ENCODE measurements at regions of chr10 and their contacts with region 1.

Region 1: DNA sequence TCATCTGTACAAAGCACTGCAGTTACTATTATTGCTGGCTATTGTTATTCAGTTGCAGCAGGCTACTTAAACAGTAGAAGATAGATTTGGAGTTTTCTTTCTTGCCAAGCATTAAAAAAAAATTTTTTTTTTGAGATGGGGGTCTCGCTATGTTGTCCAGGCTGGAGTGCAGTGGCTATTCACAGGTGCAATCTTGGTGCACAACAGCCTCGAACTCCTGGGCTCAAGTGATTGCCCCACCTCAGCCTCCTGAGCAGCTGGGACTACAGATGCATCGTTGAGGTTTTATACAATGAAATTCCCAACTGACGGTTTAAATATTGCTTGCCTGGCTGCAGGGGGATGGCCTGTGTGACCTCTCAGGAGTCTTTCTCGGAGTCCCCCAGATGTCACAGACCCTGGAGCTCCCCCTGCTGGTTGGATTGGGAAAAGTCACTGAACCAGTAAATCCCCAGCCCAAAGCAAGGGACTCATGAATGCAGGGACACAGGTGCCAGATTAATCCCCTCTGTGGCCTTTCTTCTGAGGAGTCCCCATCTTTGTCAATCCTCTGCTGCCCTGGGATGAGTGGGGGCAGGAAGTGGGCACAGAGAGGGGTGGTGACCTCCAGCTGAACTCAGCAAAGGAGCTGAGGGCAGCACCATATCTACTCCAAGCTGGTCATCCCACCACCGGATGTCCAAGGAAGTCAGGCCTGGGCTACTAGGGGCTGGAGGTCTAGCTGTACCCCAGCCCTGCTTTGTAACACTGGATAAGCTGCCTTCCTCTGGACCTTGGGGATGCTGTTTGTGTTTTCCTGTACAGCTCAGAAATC is 149.6 kb downstream of the C10orf105 start:
- DNase-seq: peak; percentile 18
- ATAC-seq: peak; percentile 82
- H3K4me3 ChIP-seq: no peak overlapping the region
- H3K27ac ChIP-seq: no peak overlapping the region
- H3K4me1 ChIP-seq: no peaks in the 10 kb centered on the region
- H3K27me3 ChIP-seq: 0 out of 2 replicates have a peak, but pooled peaks cover 3% of the 10 kb centered on the region
- CTCF ChIP-seq: peak; percentile 67 to 88 (median 83)
- POLR2A ChIP-seq: no peak
- RAD21 ChIP-seq: peak; percentile 79

Region 2: DNA sequence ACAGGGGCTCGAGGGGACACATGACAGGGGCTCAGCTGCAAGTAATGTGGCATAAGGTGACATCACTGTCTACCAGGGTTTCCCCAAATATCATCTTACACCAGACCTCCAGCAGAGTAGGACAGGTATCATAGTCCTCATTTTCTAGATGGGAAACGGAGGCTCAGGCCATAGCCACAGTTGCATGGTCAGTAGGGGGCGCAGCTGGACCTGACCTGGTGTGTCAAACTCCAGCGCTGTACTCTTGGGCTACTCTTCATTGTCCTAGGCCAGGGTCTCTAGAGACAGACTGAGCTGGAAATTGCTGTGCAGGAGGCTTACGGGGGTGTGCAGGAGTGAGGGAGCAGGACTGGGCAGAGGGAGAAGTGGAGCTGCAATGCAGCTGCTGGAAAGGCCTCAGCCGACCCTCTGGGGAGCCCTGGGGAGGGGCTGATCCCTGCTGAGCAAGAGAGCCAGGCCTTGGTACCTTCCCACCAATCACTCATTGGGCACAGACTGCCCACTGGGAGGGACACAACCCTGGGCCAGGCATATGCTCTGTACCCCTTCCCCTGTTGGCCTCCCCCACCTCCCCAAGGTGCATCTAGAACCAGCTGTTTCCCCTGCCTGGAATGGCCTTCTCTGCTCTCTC is 83.4 kb before region 1 on chr10:
- CTCF ChIA-PET with region 1: interaction called, 4 read pairs
- POLR2A ChIA-PET with region 1: no interaction called
- RAD21 ChIA-PET with region 1: no interaction called
- intact Hi-C with region 1: loop called (anchors 1 kb)
- DNase-seq: peak; percentile 36
- ATAC-seq: peak; percentile 99
- H3K4me3 ChIP-seq: no peak overlapping the region
- H3K27ac ChIP-seq: no peak overlapping the region
- H3K4me1 ChIP-seq: no peaks in the 10 kb centered on the region
- H3K27me3 ChIP-seq: 0 out of 2 replicates have a peak, but pooled peaks cover 4% of the 10 kb centered on the region
- CTCF ChIP-seq: peak; percentile 76 to 96 (median 91)
- POLR2A ChIP-seq: no peak
- RAD21 ChIP-seq: peak; percentile 86

Region 3: GRCh38 chr10:71771821-71772617 is 202.0 kb after region 1 on chr10:
- CTCF ChIA-PET with region 1: no interaction called
- POLR2A ChIA-PET with region 1: no interaction called
- RAD21 ChIA-PET with region 1: no interaction called
- intact Hi-C with region 1: no loop called
- DNase-seq: peak; percentile 79
- ATAC-seq: peak; percentile 58
- H3K4me3 ChIP-seq: peak overlapping the region; percentile 61 to 79
- H3K27ac ChIP-seq: peak overlapping the region; percentile 63
- H3K4me1 ChIP-seq: peaks cover 58 to 83% of the 10 kb centered on the region in 2 experiments
- H3K27me3 ChIP-seq: no peaks in the 10 kb centered on the region
- CTCF ChIP-seq: no peak
- POLR2A ChIP-seq: no peak
- RAD21 ChIP-seq: no peak